Heart left ventricle (tissue), 16 donors: ENCODE measurements at regions of chr18 and their contacts with region 1.

Region 1: DNA sequence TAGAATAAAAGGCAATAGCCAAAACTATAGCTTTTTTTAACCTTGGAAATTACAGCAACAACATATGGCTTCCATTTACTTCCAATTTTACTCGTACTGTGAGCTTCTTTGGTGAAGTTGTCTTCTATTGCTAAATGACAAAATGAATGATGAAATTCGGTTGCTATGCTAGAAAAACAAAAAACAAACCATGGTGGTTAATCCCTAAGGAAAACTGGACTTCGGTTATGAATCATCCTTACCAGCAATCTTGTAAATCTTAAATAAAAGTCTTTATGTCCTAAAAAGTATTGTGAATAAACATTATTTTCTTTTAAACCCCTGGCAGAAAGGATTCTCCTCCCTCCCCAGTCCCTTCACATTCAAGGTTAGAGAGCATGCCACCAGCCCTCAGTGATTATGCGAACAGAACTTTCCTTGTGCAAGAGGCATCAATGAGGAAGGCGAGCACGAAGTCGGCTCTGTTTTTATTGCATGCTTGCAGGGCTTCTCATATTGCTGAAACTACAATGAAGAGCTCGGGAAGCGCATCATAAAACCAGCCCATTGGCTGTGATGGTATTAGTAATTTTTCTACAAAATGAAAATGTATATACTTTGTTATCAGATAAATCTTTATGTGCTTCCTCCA is 62.9 kb downstream of the ZNF521 start:
- DNase-seq: no peak
- ATAC-seq: no peak
- H3K4me3 ChIP-seq: peak overlapping the region in 1 of 12 donors; percentile 29
- H3K27ac ChIP-seq: peak overlapping the region in 6 of 12 donors; percentile 16 to 51 (median 39)
- H3K4me1 ChIP-seq: peaks cover 0 to 43% (median 27%) of the 10 kb centered on the region in 12 donors
- H3K27me3 ChIP-seq: no peaks in the 10 kb centered on the region
- CTCF ChIP-seq: no peak
- POLR2A ChIP-seq: no peak

Region 2: DNA sequence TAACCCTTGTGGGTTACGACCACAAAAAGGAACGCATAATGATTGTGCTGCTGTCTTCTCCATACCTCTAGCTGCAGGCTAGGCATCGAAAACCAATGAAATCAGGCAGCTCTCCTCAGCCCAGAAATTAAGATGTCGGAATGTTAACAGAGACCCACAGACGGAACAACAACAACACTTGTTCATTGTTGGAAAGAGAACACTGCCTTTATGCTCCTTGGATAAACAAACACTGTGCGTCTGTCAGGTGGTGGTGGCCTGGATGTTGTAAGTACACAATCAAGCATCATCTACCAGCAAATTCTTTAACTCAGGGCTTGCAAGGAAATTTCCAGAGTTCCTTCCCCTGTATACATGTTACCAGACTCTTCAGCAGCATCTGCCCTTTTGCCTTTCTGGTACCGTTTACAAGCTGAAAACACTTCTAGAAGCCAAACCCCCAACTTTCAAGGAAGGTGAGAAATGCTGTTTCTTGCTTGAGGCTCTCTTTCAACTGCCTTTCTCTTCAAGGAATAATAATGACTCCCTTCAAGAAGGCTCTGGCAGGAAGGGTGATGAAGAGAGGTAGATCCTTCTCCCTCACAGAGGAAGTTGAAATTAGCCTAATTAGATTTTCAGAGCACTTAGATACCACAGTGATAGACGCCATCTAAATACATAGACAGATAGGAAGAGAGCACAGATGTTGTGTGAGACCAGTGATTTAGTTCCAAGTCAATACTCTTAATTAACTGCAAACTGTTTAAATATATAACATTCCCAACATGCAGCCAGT is 269.8 kb before region 1 on chr18:
- intact Hi-C with region 1: no loop called
- DNase-seq: no peak
- ATAC-seq: no peak
- H3K4me3 ChIP-seq: no peak overlapping the region
- H3K27ac ChIP-seq: no peak overlapping the region
- H3K4me1 ChIP-seq: no peaks in the 10 kb centered on the region
- H3K27me3 ChIP-seq: no peaks in the 10 kb centered on the region
- CTCF ChIP-seq: no peak
- POLR2A ChIP-seq: no peak

Region 3: GRCh38 chr18:25164848-25165811 is 124.0 kb before region 1 on chr18:
- intact Hi-C with region 1: loop called in 2 of 10 experiments (anchors 5 kb)
- DNase-seq: peak; percentile 19 to 46 (median 29)
- ATAC-seq: peak; percentile 72 to 82 (median 80)
- H3K4me3 ChIP-seq: peak overlapping the region; percentile 10 to 60 (median 44)
- H3K27ac ChIP-seq: peak overlapping the region in 8 of 12 donors; percentile 17 to 61 (median 44)
- H3K4me1 ChIP-seq: peaks cover 0 to 29% (median 17%) of the 10 kb centered on the region in 12 donors
- H3K27me3 ChIP-seq: no peaks in the 10 kb centered on the region
- CTCF ChIP-seq: peak in 2 of 12 donors; percentile 13 to 16
- POLR2A ChIP-seq: no peak

Region 4: DNA sequence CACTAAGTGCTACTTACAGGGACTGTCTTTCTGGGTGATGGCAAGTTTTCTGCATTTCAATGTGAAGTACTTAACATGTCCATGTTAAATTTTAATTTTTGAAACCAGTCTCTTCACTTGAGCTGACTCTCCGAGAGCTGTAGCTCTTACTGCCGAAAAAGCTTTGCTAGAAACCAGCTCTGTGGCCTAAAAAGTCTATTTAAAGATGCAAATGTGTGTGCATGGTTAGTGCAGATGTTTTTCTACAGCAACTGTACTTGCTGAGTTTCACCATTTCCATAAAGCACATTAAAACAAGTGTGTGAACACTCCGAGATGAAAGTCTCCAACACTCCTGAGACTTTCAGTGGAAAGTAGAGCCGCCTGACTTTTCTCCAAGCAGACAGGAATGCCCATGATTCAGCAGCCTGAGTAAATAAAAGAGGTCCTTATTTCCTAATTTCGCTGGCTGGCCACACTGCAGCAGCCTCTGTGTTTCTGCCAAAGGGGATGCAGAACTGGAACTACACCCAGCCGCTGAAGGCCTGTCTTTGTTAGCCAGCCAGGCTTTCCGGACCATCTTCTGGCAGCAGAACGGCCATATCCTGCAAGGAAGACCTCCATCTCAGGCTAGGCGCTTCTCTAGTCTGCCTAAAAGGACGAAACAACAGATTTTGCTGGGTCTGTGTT is 58.3 kb before region 1 on chr18:
- intact Hi-C with region 1: loop called in 5 of 10 experiments (anchors 5 to 10 kb)
- DNase-seq: peak; percentile 72 to 85 (median 79)
- ATAC-seq: peak; percentile 75 to 92 (median 87)
- H3K4me3 ChIP-seq: peak overlapping the region in 3 of 12 donors; percentile 2 to 27 (median 3)
- H3K27ac ChIP-seq: peak overlapping the region; percentile 43 to 74 (median 64)
- H3K4me1 ChIP-seq: peaks cover 6 to 73% (median 46%) of the 10 kb centered on the region in 12 donors
- H3K27me3 ChIP-seq: no peaks in the 10 kb centered on the region
- CTCF ChIP-seq: no peak
- POLR2A ChIP-seq: no peak

Region 5: DNA sequence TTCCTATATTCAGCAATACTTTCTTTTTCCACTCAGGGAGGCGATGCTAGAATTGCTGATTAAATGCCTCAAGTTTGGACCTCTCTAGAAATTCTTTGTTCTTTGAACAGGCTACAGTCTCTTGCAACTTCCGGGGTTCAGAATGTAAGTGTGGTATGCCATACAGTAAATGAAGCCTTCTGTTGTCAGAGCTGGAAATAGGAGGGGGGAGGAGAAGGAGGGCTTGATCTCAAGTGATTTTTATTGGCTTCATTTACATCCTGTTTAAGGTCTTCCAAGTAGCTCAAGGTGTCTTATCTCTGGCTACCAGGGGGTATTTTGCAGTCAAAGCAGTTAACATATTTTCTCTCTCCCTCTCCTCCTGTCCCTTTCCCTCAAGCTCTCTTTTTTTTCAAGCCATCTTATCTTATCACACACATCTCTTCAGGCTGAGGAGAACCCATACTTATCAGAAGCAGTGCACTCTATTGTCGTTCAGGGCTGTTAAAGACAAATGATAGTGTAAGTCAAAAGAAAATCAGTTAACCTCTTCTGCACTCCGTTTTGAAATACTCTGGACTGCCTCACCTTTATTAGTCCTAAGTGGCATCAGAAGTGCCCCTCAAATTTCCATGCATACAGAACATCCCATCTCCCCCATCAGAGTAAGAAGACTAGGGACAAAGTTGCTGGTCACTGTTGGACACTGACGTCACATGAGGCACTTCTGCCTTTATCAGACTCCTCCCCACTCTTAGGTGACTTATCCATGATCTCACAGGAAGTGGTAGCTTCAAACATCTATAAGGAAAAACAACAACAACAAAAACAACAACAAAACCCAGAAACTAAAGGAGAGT is 49.3 kb before region 1 on chr18:
- intact Hi-C with region 1: loop called in 5 of 10 experiments (anchors 5 to 10 kb)
- DNase-seq: no peak
- ATAC-seq: peak in 2 of 4 donors; percentile 6 to 22
- H3K4me3 ChIP-seq: no peak overlapping the region
- H3K27ac ChIP-seq: peak overlapping the region in 2 of 12 donors; percentile 9 to 55
- H3K4me1 ChIP-seq: peaks cover 0 to 50% (median 15%) of the 10 kb centered on the region in 12 donors
- H3K27me3 ChIP-seq: no peaks in the 10 kb centered on the region
- CTCF ChIP-seq: no peak
- POLR2A ChIP-seq: no peak

Region 6: DNA sequence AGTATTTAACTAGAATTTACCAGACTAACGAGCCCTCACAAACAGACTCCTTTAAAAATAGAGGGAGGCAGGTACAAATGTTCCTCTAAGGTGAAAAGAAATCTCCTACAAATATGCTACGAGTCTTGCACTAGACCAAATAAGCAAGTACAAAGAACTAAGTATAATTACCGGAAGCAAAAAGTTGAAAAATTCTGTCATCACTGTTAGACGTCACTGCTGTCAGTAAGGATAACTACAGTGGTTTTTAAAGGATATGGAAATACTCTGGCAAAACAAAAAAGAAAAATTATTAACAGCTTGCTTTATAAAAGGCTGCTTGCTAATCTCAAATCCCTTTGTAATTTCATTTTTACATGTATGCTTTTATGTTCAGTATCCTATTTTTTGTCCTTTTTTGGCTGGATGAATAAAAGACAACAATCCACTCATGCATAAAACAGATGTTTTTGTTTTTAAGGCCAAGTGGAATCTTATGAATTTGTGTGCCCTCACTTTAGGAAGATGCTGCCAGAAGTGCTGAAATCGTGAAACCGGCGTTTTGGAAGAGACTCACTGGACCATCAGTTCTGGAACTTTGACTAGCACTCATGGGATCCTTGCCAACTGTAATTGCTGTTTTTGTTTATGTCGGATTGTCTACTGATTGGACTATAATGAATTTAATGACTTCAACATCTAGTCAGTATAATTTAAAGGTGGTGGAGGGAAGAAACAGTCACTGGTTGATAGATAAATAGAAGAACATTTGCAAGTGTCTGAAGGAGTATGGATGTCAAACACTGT is 56.2 kb after region 1 on chr18:
- intact Hi-C with region 1: loop called in 7 of 10 experiments (anchors 2 to 10 kb)
- DNase-seq: no peak
- ATAC-seq: no peak
- H3K4me3 ChIP-seq: peak overlapping the region in 1 of 12 donors; percentile 9
- H3K27ac ChIP-seq: peak overlapping the region in 4 of 12 donors; percentile 7 to 89 (median 11)
- H3K4me1 ChIP-seq: peaks cover 0 to 55% (median 24%) of the 10 kb centered on the region in 12 donors
- H3K27me3 ChIP-seq: peaks cover 0 to 24% (median 0%) of the 10 kb centered on the region in 9 donors
- CTCF ChIP-seq: no peak
- POLR2A ChIP-seq: no peak

Region 7: GRCh38 chr18:25704494-25704893 is 415.4 kb after region 1 on chr18:
- intact Hi-C with region 1: no loop called
- DNase-seq: no peak
- ATAC-seq: no peak
- H3K4me3 ChIP-seq: no peak overlapping the region
- H3K27ac ChIP-seq: no peak overlapping the region
- H3K4me1 ChIP-seq: no peaks in the 10 kb centered on the region
- H3K27me3 ChIP-seq: peaks cover 0 to 3% (median 0%) of the 10 kb centered on the region in 9 donors
- CTCF ChIP-seq: no peak
- POLR2A ChIP-seq: no peak